HEK293 (cell line): ENCODE measurements at regions of chr20 and their contacts with region 1.

Region 1: GRCh38 chr20:57061058-57061900 is 205.2 kb downstream of the BMP7 start:
- H3K4me3 ChIP-seq: no peak overlapping the region
- H3K27ac ChIP-seq: no peak overlapping the region
- H3K4me1 ChIP-seq: no peaks in the 10 kb centered on the region
- CTCF ChIP-seq: peak; percentile 62; the same call in 1 of the 2 replicates

Region 2: DNA sequence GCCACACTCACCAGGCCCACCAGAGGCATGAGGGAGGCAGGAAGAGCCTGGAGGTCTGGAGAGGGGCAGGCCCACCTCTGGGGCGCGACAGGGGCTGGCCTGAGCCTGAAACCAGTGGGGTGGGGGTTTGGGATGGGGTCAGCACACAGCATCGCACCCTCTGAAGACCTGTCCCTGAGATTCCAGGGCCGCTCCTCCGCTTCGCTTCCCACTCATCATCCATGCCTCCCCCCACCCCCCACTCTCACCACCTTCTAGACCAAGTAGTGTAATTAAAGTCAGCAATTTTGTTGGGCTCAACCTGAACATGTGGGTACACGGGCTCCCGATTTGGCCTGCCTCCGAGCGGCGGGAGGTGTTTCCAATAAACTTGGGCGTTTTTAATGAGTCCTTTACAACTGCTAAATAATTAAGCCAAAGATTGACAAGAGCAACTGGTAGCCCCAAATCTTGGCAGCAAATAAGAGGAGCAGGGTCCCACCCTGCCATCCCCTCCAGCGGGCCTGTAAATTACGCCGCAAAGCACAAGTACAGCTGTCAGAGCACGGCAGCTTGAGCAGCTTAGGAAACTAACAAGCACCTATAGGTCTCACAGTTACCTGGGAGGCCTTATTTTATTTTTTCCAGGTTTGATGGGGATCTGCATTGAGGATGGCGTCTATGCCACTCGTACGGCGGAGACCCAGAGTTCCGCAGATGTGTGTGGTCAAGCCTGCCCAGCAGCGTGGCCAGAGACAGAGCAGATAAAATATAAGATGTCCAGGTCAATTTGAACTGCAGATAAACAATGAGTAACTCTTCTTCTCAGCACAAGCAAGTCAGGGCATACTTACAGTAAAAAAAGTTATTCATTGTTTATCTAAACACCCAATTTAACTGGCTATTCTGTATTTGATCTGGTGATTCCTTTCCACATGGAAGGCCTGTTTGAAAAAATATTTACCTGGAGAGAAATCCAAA is 12.0 kb before region 1 on chr20:
- CTCF ChIA-PET with region 1: interaction called, 17 read pairs
- POLR2A ChIA-PET with region 1: no interaction called
- H3K4me3 ChIP-seq: no peak overlapping the region
- H3K27ac ChIP-seq: no peak overlapping the region
- H3K4me1 ChIP-seq: no peaks in the 10 kb centered on the region; the same call in 1 of the 2 replicates
- CTCF ChIP-seq: no peak

Region 3: DNA sequence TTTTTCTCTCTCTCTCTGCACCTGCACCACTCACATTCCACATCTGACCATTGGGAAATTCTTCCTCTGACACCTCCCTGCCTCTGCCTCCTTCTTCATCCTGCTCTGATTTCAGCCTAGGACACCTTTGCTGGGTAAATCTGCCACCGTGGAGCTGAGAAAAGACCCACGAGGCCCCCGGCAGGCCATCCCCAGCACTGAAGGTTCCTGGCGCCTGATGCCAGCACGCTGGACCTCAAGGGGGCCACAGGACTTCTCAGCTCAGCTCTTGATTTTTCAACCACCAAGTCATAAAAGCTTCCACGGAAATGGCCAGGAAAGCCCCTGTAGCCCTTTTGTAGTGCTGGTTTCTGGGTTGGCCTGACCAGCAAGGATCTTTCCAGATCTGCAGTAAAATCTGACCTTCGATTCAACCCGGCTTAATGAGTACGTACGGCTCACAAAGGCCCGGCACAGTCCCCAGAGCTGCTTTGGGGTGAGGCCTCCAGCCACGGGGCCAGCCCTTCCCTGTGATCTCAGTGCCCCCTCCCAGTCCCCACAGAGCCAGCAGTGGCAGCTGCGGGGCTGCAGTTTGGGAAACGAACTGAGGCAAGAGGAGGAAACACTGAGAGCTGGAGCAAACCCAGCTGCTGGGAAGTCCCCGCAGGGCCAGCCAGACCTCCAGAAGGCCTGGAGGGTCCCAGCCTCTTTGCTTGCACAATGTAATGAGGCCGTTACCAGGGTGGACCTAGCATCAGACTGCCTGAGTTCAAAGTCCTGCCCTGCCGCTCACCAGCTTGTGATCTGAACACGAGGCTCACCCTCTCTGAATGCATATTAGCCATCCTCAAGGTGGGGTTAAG is 47.7 kb after region 1 on chr20:
- CTCF ChIA-PET with region 1: no interaction called
- POLR2A ChIA-PET with region 1: no interaction called
- H3K4me3 ChIP-seq: no peak overlapping the region
- H3K27ac ChIP-seq: no peak overlapping the region
- H3K4me1 ChIP-seq: no peaks in the 10 kb centered on the region
- CTCF ChIP-seq: no peak